Cardiac septum (tissue), 1 donor: ENCODE measurements at regions of chr15 and their contacts with region 1.

Region 1: DNA sequence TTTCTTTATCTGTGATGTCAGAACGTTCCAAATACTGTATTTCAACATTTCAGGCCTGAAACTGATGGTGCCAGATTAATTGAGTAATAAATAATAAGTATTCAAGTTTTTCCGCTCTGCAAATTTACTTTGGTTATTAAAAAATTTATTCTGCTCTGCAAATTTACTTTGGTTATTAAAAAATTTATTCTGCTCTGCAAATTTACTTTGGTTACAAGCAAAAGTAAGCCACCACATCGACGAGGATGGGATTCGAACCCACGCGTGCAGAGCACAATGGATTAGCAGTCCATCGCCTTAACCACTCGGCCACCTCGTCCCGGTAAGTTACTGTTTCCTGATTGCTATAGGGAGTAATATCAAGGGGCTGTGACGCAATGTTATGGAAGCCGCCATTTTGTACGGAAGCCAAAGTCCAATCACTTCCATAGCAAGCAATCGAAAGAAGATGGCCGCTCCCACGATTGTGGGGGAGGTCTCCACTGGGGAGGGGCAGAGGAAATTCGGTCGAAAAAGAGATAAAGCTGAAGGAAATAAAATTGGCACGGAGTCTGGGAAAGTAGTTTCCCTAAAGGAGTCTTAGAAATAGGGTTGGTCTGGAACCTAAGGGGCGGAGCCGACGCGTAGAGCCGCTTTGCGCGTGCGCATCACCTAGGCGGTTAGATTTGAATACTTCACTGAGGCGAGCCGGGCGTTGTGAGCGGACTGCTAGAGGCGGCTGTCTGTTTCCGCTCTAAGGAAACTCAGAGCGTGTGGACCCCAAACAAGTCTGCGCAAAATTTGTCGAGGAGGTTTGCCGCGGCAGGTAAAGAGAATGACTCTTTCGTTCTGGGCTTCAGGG is at the start of gene KNL1:
- DNase-seq: peak; percentile 96
- total RNA-seq, gene KNL1: 0.43 TPM

Region 2: GRCh38 chr15:40516322-40516721 is 77.5 kb before region 1 on chr15:
- intact Hi-C with region 1: loop called (anchors 5 kb)
- DNase-seq: no peak

Region 3: DNA sequence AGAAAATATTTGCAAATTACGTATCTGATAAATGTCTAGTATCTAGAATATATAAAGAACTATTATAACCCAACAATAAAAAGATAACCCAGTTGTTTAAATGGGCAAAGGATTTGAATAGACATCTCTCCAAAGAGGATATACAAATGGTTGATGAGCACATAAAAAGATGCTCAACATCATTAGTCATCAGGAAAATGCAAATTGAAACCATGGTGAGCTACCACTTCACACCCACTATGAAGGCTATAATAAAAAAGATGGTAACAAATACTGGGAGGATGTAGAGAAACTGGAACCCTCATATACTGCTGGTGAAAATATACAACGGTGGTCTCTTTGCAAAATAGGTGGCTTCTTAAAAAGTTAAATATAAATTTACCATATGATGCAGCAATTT is 129.1 kb after region 1 on chr15:
- intact Hi-C with region 1: no loop called
- DNase-seq: no peak

Region 4: DNA sequence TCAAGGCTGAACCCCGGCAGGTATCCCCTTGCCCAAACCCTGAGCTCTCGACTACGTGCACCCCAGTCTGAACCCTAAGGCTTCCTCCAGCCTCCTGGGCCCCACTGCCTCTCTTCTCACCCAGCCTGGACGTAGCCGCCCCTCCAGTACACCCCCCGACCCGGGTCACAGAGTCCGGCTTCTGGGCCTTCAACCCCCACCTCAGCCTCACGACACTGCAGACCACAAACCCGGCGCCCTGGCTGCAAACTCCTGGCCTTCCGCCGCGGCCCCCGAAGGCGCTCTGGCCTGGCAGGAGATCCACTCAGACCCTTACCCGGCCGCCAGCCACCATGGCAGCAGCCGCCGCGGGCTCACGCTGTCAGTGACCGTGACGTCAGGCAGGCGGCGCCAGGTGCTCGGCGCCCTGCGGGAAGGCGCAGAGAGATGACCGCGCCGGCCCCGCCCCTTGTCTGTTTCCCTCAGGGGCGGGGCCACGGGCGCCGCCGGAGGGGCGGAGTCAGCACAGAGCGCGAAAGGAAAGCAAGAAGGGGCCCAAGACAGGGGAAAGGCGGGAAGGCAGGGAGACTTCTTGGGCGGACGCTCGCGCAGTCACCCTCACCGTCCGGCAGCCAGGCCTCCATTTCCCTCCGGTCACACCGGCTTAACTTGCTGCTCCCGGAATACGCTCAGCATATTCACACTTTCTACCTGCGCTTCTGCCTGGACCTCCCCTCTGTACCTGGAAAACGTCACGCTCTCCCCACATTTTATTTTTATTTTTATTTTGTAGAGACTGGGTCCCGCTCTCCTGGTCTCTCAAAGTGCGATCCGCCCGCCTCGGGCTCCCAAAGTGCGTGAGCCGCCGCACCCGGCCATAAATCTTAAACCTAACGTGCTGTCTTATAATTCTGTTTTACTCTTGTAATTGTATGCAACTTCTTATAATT is 161.3 kb after region 1 on chr15 and contains the start of gene RMDN3:
- intact Hi-C with region 1: loop called (anchors 10 kb)
- DNase-seq: peak; percentile 96
- total RNA-seq, gene RMDN3: 21.1 TPM